CD4-positive, alpha-beta T cell (primary cell): ENCODE measurements at regions of chr3 and their contacts with region 1.

Region 1: GRCh38 chr3:48439820-48440589 is at the starts of genes CCDC51 and TMA7:
- DNase-seq: peak; percentile 95 to 99 (median 98)
- ATAC-seq: peak; percentile 91
- H3K4me3 ChIP-seq: peak within 1 kb of the TSS; percentile 57
- H3K4me3 Mint-ChIP-seq: peak within 1 kb of the TSS; percentile 96
- H3K27ac ChIP-seq: peak within 1 kb of the TSS; percentile 88 to 94
- H3K27ac Mint-ChIP-seq: no peak within 1 kb of the TSS
- H3K4me1 ChIP-seq: peaks cover 44% of the 10 kb centered on the region
- H3K4me1 Mint-ChIP-seq: peaks cover 52% of the 10 kb centered on the region
- H3K27me3 ChIP-seq: no peaks in the 10 kb centered on the region
- H3K27me3 Mint-ChIP-seq: no peaks in the 10 kb centered on the region
- CTCF ChIP-seq: no peak
- total RNA-seq, gene CCDC51: 5.5 to 5.8 TPM
- total RNA-seq, gene TMA7: 289 to 297 TPM

Region 2: DNA sequence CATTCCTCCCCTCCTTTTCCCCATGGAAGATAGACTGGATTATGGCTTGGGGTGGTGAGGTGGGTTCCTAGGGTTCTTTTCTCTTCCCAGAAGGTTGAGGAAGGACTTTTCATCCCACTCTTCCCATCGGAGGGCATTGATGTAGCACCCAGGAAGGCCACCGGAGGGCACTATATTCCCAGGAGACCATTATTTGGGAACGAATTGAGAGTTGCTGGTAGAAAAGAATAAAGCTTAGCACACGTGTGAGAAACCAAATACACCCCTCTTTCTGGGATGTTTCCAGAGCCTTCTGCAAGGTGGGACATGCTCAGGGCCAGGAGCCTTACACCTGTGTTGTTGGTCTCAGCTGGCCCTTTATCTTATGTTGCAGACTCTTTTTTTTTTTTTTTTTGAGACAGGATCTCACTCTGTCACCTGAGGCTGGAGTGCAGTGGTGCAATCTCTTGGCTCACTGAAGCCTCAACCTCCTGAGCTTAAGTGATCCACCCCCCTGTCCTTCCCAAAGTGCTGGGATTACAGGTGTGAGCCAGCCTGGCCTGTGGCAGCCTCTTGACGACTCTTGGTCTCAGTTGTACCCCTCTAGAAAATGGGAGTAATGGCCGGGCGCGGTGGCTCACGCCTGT is 245.4 kb before region 1 on chr3:
- CTCF ChIA-PET with region 1: interaction called, 4 read pairs
- POLR2A ChIA-PET with region 1: no interaction called
- intact Hi-C with region 1: loop called in 1 of 2 experiments (anchors 5 kb)
- DNase-seq: peak in 5 of 14 experiments; percentile 7 to 40 (median 13)
- ATAC-seq: no peak
- H3K4me3 ChIP-seq: no peak overlapping the region
- H3K4me3 Mint-ChIP-seq: no peak overlapping the region
- H3K27ac ChIP-seq: no peak overlapping the region
- H3K27ac Mint-ChIP-seq: no peak overlapping the region
- H3K4me1 ChIP-seq: no peaks in the 10 kb centered on the region
- H3K4me1 Mint-ChIP-seq: no peaks in the 10 kb centered on the region
- H3K27me3 ChIP-seq: no peaks in the 10 kb centered on the region
- H3K27me3 Mint-ChIP-seq: no peaks in the 10 kb centered on the region
- CTCF ChIP-seq: peak; percentile 34

Region 3: DNA sequence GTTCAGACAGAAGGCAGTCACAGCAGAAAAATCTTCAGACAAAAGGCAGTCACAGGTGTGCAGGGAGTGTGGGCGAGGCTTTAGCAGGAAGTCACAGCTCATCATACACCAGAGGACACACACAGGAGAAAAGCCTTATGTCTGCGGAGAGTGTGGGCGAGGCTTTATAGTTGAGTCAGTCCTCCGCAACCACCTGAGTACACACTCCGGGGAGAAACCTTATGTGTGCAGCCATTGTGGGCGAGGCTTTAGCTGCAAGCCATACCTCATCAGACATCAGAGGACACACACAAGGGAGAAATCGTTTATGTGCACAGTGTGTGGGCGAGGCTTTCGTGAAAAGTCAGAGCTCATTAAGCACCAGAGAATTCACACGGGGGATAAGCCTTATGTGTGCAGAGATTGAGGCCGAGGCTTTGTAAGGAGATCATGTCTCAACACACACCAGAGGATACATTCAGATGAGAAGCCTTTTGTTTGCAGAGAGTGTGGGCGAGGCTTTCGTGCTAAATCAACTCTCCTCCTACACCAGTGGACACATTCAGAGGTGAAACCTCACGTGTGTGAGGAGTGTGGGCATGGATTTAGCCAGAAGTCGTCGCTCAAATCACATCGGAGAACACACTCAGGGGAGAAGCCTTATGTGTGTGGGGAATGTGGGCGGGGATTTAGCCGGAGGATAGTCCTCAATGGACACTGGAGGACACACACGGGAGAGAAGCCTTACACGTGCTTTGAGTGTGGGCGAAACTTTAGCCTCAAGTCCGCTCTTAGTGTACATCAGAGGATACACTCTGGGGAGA is 171.4 kb before region 1 on chr3:
- CTCF ChIA-PET with region 1: interaction called, 38 read pairs
- POLR2A ChIA-PET with region 1: interaction called, 11 read pairs
- intact Hi-C with region 1: loop called (anchors 1 kb)
- DNase-seq: peak; percentile 55 to 90 (median 76)
- ATAC-seq: peak; percentile 95
- H3K4me3 ChIP-seq: peak overlapping the region; percentile 28
- H3K4me3 Mint-ChIP-seq: peak overlapping the region; percentile 74
- H3K27ac ChIP-seq: peak overlapping the region; percentile 57 to 67
- H3K27ac Mint-ChIP-seq: peak overlapping the region; percentile 87
- H3K4me1 ChIP-seq: peaks cover 29% of the 10 kb centered on the region
- H3K4me1 Mint-ChIP-seq: peaks cover 38% of the 10 kb centered on the region
- H3K27me3 ChIP-seq: no peaks in the 10 kb centered on the region
- H3K27me3 Mint-ChIP-seq: no peaks in the 10 kb centered on the region
- CTCF ChIP-seq: no peak

Region 4: DNA sequence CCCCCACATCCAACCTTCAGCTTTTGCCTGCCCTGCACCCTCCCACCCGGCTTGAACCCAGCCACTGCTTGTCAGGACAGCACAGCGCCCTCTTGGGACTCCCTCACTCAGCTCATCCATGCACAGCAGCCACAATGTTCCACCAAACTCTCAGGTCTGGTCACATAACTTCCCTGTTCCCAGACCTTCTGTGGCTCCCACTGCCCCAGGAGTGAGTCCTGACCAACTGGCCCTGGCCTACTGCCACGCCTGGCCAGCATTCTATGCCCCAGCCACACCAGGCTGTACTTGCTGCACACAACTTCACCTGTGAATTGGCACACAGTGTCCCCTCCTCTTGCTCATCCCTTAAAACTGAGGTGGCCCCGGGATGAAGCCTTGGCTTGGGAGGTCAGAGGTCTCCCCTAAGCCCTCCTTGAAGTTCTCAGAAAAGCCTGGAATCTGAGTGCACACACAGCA is 31.2 kb before region 1 on chr3:
- CTCF ChIA-PET with region 1: interaction called, 14 read pairs
- POLR2A ChIA-PET with region 1: no interaction called
- intact Hi-C with region 1: no loop called
- DNase-seq: peak in 2 of 14 experiments; percentile 1 to 25
- ATAC-seq: no peak
- H3K4me3 ChIP-seq: no peak overlapping the region
- H3K4me3 Mint-ChIP-seq: no peak overlapping the region
- H3K27ac ChIP-seq: no peak overlapping the region
- H3K27ac Mint-ChIP-seq: no peak overlapping the region
- H3K4me1 ChIP-seq: no peaks in the 10 kb centered on the region
- H3K4me1 Mint-ChIP-seq: no peaks in the 10 kb centered on the region
- H3K27me3 ChIP-seq: no peaks in the 10 kb centered on the region
- H3K27me3 Mint-ChIP-seq: no peaks in the 10 kb centered on the region
- CTCF ChIP-seq: no peak

Region 5: DNA sequence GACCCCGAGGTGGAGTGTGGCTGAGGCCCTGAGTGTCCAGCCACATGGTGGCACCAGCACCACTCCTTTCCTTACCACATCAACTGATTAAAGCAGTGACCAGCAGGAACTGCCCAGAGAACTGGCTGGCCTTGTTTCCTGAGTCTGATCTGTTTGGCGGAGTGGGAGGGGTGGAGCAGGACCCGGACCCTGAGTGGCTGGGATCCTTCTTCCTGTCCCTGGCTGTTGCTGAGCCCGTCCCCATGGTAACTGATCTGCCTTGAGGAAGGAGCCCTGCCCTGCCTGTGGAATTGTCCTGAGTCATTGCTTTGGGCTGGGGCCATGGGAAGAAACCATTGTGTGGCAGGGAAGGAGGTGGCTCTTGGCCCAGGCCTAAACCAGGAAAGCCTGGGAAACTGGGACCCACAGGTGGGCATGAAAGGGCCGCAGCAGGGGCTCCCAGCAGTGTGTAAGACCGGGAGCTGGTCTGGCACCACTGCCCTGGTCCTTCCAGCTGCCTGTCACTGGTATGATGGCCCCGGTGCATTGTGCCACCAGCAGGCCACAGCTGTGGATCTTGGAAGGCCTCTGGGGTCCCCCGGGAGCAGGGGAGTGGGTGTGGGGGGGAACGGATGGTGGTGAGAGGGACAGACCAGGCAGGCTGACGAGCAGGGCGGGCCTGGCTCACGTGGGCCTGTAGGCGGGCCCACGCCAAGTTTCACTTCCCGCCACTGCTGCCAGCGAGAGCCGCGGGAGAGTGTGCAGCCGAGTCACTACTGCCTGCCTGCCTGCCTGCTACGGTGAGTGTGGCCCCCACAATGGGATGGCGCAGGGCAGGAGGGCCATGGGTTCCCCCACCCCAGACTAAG is 25.8 kb after region 1 on chr3:
- CTCF ChIA-PET with region 1: interaction called, 13 read pairs
- POLR2A ChIA-PET with region 1: interaction called, 21 read pairs
- intact Hi-C with region 1: no loop called
- DNase-seq: peak; percentile 62 to 89 (median 76)
- ATAC-seq: peak; percentile 96
- H3K4me3 ChIP-seq: peak overlapping the region; percentile 72
- H3K4me3 Mint-ChIP-seq: peak overlapping the region; percentile 87
- H3K27ac ChIP-seq: peak overlapping the region; percentile 94
- H3K27ac Mint-ChIP-seq: peak overlapping the region; percentile 94
- H3K4me1 ChIP-seq: peaks cover 66% of the 10 kb centered on the region
- H3K4me1 Mint-ChIP-seq: peaks cover 53% of the 10 kb centered on the region
- H3K27me3 ChIP-seq: no peaks in the 10 kb centered on the region
- H3K27me3 Mint-ChIP-seq: no peaks in the 10 kb centered on the region
- CTCF ChIP-seq: no peak

Region 6: DNA sequence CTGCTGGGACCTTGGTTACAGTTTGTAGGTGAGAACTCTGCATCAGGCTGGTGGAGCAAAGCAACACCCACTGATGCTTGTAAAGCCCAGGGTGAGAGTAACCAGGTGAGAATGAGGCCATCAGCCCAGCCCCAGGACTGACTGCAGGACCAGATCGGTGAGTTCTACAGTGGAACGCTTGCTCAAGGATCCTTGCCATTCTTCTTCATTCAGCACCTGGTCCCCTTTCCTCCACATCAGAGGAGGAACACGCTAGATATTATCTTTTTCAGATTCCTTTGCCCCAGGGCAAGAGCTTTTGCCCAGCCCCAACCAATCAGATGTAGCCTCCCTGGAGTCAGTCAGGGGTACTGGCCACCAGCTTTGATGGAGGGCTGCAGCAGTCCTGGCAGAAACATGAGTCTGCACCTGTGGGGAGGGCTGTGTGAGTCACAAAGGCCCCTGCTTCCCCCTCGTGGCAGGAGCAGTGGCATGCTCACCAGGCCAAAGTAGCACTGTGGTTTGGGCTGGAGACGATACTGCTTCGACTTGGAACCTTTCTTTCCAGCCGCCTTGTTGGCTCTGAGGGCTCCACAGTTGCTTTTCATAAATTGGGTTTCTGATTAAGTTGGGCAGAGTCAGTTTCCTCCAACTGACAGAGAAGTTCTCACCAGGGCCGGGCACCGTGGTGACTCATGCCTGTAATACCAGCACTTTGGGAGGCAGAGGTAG is 67.5 kb after region 1 on chr3:
- CTCF ChIA-PET with region 1: interaction called, 32 read pairs
- POLR2A ChIA-PET with region 1: interaction called, 21 read pairs
- intact Hi-C with region 1: loop called (anchors 1 kb)
- DNase-seq: peak; percentile 64 to 89 (median 74)
- ATAC-seq: peak; percentile 89
- H3K4me3 ChIP-seq: no peak overlapping the region
- H3K4me3 Mint-ChIP-seq: peak overlapping the region; percentile 59
- H3K27ac ChIP-seq: peak overlapping the region in 1 of 2 donors; percentile 45
- H3K27ac Mint-ChIP-seq: peak overlapping the region; percentile 74
- H3K4me1 ChIP-seq: peaks cover 64% of the 10 kb centered on the region
- H3K4me1 Mint-ChIP-seq: peaks cover 61% of the 10 kb centered on the region
- H3K27me3 ChIP-seq: no peaks in the 10 kb centered on the region
- H3K27me3 Mint-ChIP-seq: no peaks in the 10 kb centered on the region
- CTCF ChIP-seq: peak; percentile 86

Region 7: GRCh38 chr3:48556793-48557626 is 117.0 kb after region 1 on chr3 and contains the start of gene PFKFB4:
- CTCF ChIA-PET with region 1: interaction called, 14 read pairs
- POLR2A ChIA-PET with region 1: interaction called, 28 read pairs
- intact Hi-C with region 1: no loop called
- DNase-seq: peak; percentile 98 to 100 (median 99)
- ATAC-seq: peak; percentile 87
- H3K4me3 ChIP-seq: peak within 1 kb of the TSS; percentile 55
- H3K4me3 Mint-ChIP-seq: peak within 1 kb of the TSS; percentile 87
- H3K27ac ChIP-seq: no peak within 1 kb of the TSS
- H3K27ac Mint-ChIP-seq: peak within 1 kb of the TSS; percentile 43
- H3K4me1 ChIP-seq: peaks cover 34% of the 10 kb centered on the region
- H3K4me1 Mint-ChIP-seq: peaks cover 25% of the 10 kb centered on the region
- H3K27me3 ChIP-seq: no peaks in the 10 kb centered on the region
- H3K27me3 Mint-ChIP-seq: no peaks in the 10 kb centered on the region
- CTCF ChIP-seq: no peak
- total RNA-seq, gene PFKFB4: 0.98 to 2.5 TPM

Region 8: GRCh38 chr3:48581621-48582481 is 141.8 kb after region 1 on chr3:
- CTCF ChIA-PET with region 1: no interaction called
- POLR2A ChIA-PET with region 1: no interaction called
- intact Hi-C with region 1: no loop called
- DNase-seq: no peak
- ATAC-seq: no peak
- H3K4me3 ChIP-seq: no peak overlapping the region
- H3K4me3 Mint-ChIP-seq: no peak overlapping the region
- H3K27ac ChIP-seq: no peak overlapping the region
- H3K27ac Mint-ChIP-seq: no peak overlapping the region
- H3K4me1 ChIP-seq: no peaks in the 10 kb centered on the region
- H3K4me1 Mint-ChIP-seq: no peaks in the 10 kb centered on the region
- H3K27me3 ChIP-seq: no peaks in the 10 kb centered on the region
- H3K27me3 Mint-ChIP-seq: peaks cover 6% of the 10 kb centered on the region
- CTCF ChIP-seq: no peak